Activated T-helper 2 cell treated with anti-CD3 and anti-CD28 coated beads, Interferon-gamma antibody, Interleukin-2, Interleukin-4, amounts not matched to agents 10 μg/mL and 5 μg/mL and 100 μg/mL, durations not matched to agents 14 hours and 24 hours and 36 hours (primary cell): ENCODE measurements at regions of chr1 and their contacts with region 1.

Region 1: GRCh38 chr1:216111842-216112241 is 311.4 kb downstream of the USH2A start:
- DNase-seq: no peak
- H3K4me3 Mint-ChIP-seq: no peak overlapping the region
- H3K27ac Mint-ChIP-seq: no peak overlapping the region
- H3K4me1 Mint-ChIP-seq: no peaks in the 10 kb centered on the region
- H3K27me3 Mint-ChIP-seq: no peaks in the 10 kb centered on the region

Region 2: GRCh38 chr1:215682232-215682631 is 429.6 kb before region 1 on chr1:
- intact Hi-C with region 1: no loop called
- DNase-seq: no peak
- H3K4me3 Mint-ChIP-seq: no peak overlapping the region
- H3K27ac Mint-ChIP-seq: no peak overlapping the region
- H3K4me1 Mint-ChIP-seq: no peaks in the 10 kb centered on the region
- H3K27me3 Mint-ChIP-seq: no peaks in the 10 kb centered on the region

Region 3: DNA sequence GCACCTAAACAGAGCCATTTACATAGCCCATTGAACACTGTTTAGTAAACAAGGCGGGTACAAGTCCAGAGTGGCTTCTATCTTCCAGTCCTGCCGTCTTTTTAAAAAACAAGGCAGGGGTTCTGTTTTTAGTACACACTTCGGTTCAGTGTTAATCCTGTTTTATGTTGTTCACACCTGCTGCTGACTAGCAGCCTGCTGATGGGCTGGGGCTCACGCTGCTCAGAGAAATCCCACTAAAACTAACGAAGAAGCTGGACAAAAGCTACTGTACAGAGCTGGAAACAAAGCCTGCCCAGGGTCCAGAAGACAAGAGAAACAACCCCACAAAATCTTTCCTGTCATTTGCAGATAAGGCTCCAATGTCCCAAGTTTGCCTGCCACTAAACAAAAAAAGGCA is 598.2 kb after region 1 on chr1:
- intact Hi-C with region 1: loop called (anchors 10 kb)
- DNase-seq: no peak
- H3K4me3 Mint-ChIP-seq: no peak overlapping the region
- H3K27ac Mint-ChIP-seq: no peak overlapping the region
- H3K4me1 Mint-ChIP-seq: no peaks in the 10 kb centered on the region
- H3K27me3 Mint-ChIP-seq: no peaks in the 10 kb centered on the region